ENCODE measurements at regions of chr3 and their contacts with region 1.

Region 1: GRCh38 chr3:101988591-101988990 is 139.3 kb downstream of the NFKBIZ start:
- DNase-seq: no peak
- ATAC-seq: no peak
- H3K4me3 ChIP-seq: no peak overlapping the region
- H3K27ac ChIP-seq: no peak overlapping the region
- H3K4me1 ChIP-seq: no peaks in the 10 kb centered on the region
- H3K27me3 ChIP-seq: no peaks in the 10 kb centered on the region
- CTCF ChIP-seq: no peak

Region 2: DNA sequence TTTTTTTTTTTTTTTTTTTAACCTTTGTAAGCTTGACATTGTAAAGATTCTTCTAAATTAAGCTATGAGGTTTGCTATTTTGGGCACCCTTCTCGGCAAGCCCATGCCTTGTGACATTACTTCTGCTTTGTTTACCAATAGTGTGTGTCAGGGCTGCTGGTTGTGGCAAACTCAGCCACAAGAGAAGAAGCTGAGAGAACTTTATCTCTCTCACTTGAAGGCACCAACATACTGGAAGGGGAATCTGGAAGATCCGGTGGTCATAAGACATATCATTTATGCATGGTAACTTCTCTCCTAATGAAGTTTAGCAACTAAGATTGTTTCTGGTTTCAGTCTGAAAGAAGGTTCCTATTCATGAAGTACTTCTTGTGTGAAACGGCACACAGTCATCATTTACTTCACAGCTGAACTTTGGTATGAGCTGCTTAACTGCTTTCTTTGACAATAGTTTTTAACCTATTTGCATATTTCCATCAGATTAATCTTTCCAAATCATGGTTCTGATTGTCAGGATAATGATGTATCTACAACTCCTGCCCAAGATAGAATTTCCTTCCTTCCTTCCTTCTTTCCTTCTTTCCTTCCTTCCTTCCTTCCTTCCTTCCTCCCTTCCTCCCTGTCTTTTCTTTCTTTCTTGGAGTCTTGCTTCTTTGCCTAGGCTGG is 50.0 kb after region 1 on chr3:
- CTCF ChIA-PET with region 1: no interaction called
- POLR2A ChIA-PET with region 1: interaction called, 11 read pairs
- in situ Hi-C with region 1: no loop called
- intact Hi-C with region 1: no loop called
- DNase-seq: no peak
- ATAC-seq: no peak
- H3K4me3 ChIP-seq: no peak overlapping the region
- H3K27ac ChIP-seq: no peak overlapping the region
- H3K4me1 ChIP-seq: no peaks in the 10 kb centered on the region
- H3K27me3 ChIP-seq: no peaks in the 10 kb centered on the region
- CTCF ChIP-seq: no peak